ENCODE measurements at regions of chr11 and their contacts with region 1.

Region 1: DNA sequence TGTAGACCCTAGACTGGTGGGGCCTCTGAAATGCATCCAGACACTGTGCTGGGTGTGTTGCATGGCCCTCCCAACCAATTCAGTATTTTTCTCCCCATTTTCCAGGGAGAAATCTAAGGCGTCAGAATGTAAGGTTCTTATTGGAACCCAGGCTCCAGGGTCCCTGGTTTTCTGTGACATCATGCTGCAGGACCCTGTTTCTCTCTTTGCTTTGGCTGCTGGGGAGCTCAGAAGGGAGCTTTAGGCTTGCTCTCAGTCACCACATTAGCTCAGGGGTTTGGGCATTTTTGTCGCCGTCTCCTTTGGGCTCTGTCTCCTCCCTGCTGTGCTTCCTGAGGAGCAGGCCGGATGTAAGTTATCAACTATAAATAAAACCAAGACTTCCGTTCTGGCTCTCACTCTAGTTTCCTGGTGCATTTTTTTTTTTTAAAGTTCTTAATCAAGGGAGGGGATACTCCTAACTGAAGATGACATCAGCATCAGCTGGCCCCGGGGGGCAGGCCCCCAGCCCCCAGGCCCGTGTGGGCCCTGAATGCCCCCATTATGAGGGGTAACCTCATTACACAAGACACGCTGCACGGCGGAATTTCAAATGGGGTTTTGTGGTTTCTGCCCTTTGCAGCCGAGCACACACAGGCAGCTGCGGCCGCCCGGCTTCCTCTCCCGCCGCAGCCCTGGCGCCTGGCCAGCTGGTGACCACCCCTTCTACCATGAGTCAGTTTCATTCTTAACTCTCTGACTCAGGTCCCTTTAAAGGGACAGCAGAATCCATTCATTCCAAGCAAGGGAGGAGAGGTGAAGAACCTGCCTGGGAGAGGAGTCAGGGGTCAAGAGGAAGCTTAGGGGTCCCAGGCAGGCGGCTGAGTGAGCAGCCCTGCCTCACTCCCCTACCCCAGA is 3.2 kb downstream of the MYEOV start:
- H3K4me3 Mint-ChIP-seq: peak overlapping the region; percentile 71
- H3K27ac Mint-ChIP-seq: peak overlapping the region; percentile 86
- H3K4me1 Mint-ChIP-seq: peaks cover 79% of the 10 kb centered on the region
- H3K27me3 Mint-ChIP-seq: peaks cover 43% of the 10 kb centered on the region

Region 2: DNA sequence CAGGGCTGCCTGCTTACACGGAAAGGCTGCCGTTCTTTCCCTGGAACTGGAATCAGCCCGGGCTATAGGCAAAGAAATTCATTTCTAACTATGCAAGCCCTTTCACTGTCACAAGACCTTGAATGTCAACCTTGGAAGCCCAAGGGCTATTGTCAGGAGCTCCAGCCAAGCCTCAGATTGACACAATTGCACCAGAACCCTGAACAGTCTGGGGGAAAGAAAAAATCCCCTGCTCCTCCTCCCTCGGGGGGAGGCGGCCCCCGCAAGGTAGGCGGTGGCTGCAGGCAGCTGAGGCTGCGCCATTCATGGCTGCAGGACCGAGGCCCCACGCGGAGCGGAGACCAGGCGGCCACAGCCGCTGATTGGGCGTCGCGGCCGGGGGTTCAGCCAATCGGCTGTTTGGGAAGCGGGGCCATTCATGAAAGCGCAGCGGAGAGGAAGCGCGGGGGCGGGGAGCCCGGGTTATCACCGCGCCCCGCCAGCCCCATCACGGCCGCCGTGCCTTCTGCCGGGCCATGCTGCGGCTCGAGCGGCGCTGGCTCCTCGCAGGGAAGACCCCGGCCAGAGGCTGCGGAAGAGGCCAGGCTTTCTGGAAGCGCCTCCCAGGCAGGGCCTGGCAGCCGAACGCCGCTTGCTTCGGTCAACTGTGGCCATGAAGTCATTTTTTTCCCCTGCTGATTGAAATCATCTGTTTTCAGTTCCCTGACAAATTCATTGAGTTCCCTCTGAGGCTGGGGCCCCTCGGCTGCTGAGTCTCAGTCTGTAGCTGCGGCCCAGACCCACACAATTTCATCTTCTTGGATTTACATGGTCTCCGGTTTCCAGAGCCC is 146.2 kb after region 1 on chr11:
- intact Hi-C with region 1: loop called (anchors 2 kb)
- H3K4me3 Mint-ChIP-seq: peak overlapping the region; percentile 57
- H3K27ac Mint-ChIP-seq: peak overlapping the region; percentile 87
- H3K4me1 Mint-ChIP-seq: peaks cover 63% of the 10 kb centered on the region
- H3K27me3 Mint-ChIP-seq: peaks cover 68% of the 10 kb centered on the region

Region 3: GRCh38 chr11:69540118-69540502 is 243.0 kb after region 1 on chr11:
- intact Hi-C with region 1: loop called (anchors 1 kb)
- H3K4me3 Mint-ChIP-seq: no peak overlapping the region
- H3K27ac Mint-ChIP-seq: peak overlapping the region; percentile 93
- H3K4me1 Mint-ChIP-seq: peaks cover 45% of the 10 kb centered on the region
- H3K27me3 Mint-ChIP-seq: peaks cover 12% of the 10 kb centered on the region